ENCODE measurements at regions of chr6 and their contacts with region 1.

Region 1: GRCh38 chr6:44246663-44247337 is at the start of gene HSP90AB1:
- DNase-seq: peak; percentile 99
- H3K4me3 Mint-ChIP-seq: peak within 1 kb of the TSS; percentile 92
- H3K27ac Mint-ChIP-seq: peak within 1 kb of the TSS; percentile 98
- H3K4me1 Mint-ChIP-seq: peaks cover 40% of the 10 kb centered on the region
- H3K27me3 Mint-ChIP-seq: peaks cover 3% of the 10 kb centered on the region
- total RNA-seq, gene HSP90AB1: 2,450 and 2,479 TPM in 2 replicates

Region 2: GRCh38 chr6:43575772-43576551 is 670.8 kb before region 1 on chr6 and contains the starts of genes POLH and XPO5:
- intact Hi-C with region 1: loop called (anchors 10 kb)
- DNase-seq: peak; percentile 98
- H3K4me3 Mint-ChIP-seq: peak within 1 kb of the TSS; percentile 95
- H3K27ac Mint-ChIP-seq: peak within 1 kb of the TSS; percentile 90
- H3K4me1 Mint-ChIP-seq: peaks cover 46% of the 10 kb centered on the region
- H3K27me3 Mint-ChIP-seq: no peaks in the 10 kb centered on the region
- total RNA-seq, gene POLH: 34.2 and 37.9 TPM in 2 replicates
- total RNA-seq, gene XPO5: 143 and 145 TPM in 2 replicates

Region 3: GRCh38 chr6:44010411-44011349 is 236.1 kb before region 1 on chr6:
- intact Hi-C with region 1: no loop called
- DNase-seq: no peak
- H3K4me3 Mint-ChIP-seq: no peak overlapping the region
- H3K27ac Mint-ChIP-seq: no peak overlapping the region
- H3K4me1 Mint-ChIP-seq: peaks cover 2% of the 10 kb centered on the region
- H3K27me3 Mint-ChIP-seq: peaks cover 28% of the 10 kb centered on the region

Region 4: GRCh38 chr6:44257025-44257752 is 10.4 kb after region 1 on chr6 and contains the start of gene SLC35B2:
- intact Hi-C with region 1: loop called (anchors 1 kb)
- DNase-seq: peak; percentile 93
- H3K4me3 Mint-ChIP-seq: peak within 1 kb of the TSS; percentile 94
- H3K27ac Mint-ChIP-seq: peak within 1 kb of the TSS; percentile 94
- H3K4me1 Mint-ChIP-seq: peaks cover 57% of the 10 kb centered on the region
- H3K27me3 Mint-ChIP-seq: no peaks in the 10 kb centered on the region
- total RNA-seq, gene SLC35B2: 25.3 and 28.0 TPM in 2 replicates

Measured in activated CD4-positive, alpha-beta T cell treated with anti-CD3 and anti-CD28 coated beads, Interleukin-2, amount 10 ng/mL, durations not matched to agents 24 days and 14 days (primary cell).